Activated CD4-positive, alpha-beta T cell treated with anti-CD3 and anti-CD28 coated beads, Interleukin-2, amount 10 ng/mL, durations not matched to agents 24 days and 14 days (primary cell): ENCODE measurements at regions of chr12 and their contacts with region 1.

Region 1: GRCh38 chr12:94140556-94140955 is 7.8 kb upstream of the PLXNC1 start:
- DNase-seq: peak; percentile 87
- H3K4me3 Mint-ChIP-seq: no peak overlapping the region
- H3K27ac Mint-ChIP-seq: no peak overlapping the region
- H3K4me1 Mint-ChIP-seq: peaks cover 6% of the 10 kb centered on the region
- H3K27me3 Mint-ChIP-seq: peaks cover 17% of the 10 kb centered on the region

Region 2: GRCh38 chr12:93762059-93762719 is 378.4 kb before region 1 on chr12:
- intact Hi-C with region 1: no loop called
- DNase-seq: no peak
- H3K4me3 Mint-ChIP-seq: no peak overlapping the region
- H3K27ac Mint-ChIP-seq: no peak overlapping the region
- H3K4me1 Mint-ChIP-seq: peaks cover 30% of the 10 kb centered on the region
- H3K27me3 Mint-ChIP-seq: no peaks in the 10 kb centered on the region

Region 3: GRCh38 chr12:94126067-94126466 is 14.5 kb before region 1 on chr12:
- intact Hi-C with region 1: no loop called
- DNase-seq: no peak
- H3K4me3 Mint-ChIP-seq: peak overlapping the region; percentile 42
- H3K27ac Mint-ChIP-seq: no peak overlapping the region
- H3K4me1 Mint-ChIP-seq: peaks cover 40% of the 10 kb centered on the region
- H3K27me3 Mint-ChIP-seq: peaks cover 3% of the 10 kb centered on the region

Region 4: GRCh38 chr12:94244165-94245133 is 103.9 kb after region 1 on chr12:
- intact Hi-C with region 1: no loop called
- DNase-seq: peak; percentile 80
- H3K4me3 Mint-ChIP-seq: peak overlapping the region; percentile 53
- H3K27ac Mint-ChIP-seq: peak overlapping the region; percentile 77
- H3K4me1 Mint-ChIP-seq: peaks cover 33% of the 10 kb centered on the region
- H3K27me3 Mint-ChIP-seq: no peaks in the 10 kb centered on the region

Region 5: GRCh38 chr12:94434171-94434570 is 293.6 kb after region 1 on chr12:
- intact Hi-C with region 1: loop called (anchors 5 kb)
- DNase-seq: no peak
- H3K4me3 Mint-ChIP-seq: no peak overlapping the region
- H3K27ac Mint-ChIP-seq: no peak overlapping the region
- H3K4me1 Mint-ChIP-seq: peaks cover 27% of the 10 kb centered on the region
- H3K27me3 Mint-ChIP-seq: no peaks in the 10 kb centered on the region

Region 6: GRCh38 chr12:94532490-94533422 is 392.2 kb after region 1 on chr12:
- intact Hi-C with region 1: loop called (anchors 1 kb)
- DNase-seq: peak; percentile 92
- H3K4me3 Mint-ChIP-seq: no peak overlapping the region
- H3K27ac Mint-ChIP-seq: no peak overlapping the region
- H3K4me1 Mint-ChIP-seq: peaks cover 14% of the 10 kb centered on the region
- H3K27me3 Mint-ChIP-seq: peaks cover 7% of the 10 kb centered on the region